ENCODE measurements at regions of chr11 and their contacts with region 1.

Region 1: GRCh38 chr11:120303004-120303637 is 22.0 kb upstream of the TLCD5 start:
- DNase-seq: peak; percentile 81
- ATAC-seq: peak; percentile 95
- H3K4me3 Mint-ChIP-seq: no peak overlapping the region
- H3K27ac Mint-ChIP-seq: no peak overlapping the region
- H3K4me1 Mint-ChIP-seq: peaks cover 9% of the 10 kb centered on the region
- H3K27me3 Mint-ChIP-seq: peaks cover 54% of the 10 kb centered on the region

Region 2: DNA sequence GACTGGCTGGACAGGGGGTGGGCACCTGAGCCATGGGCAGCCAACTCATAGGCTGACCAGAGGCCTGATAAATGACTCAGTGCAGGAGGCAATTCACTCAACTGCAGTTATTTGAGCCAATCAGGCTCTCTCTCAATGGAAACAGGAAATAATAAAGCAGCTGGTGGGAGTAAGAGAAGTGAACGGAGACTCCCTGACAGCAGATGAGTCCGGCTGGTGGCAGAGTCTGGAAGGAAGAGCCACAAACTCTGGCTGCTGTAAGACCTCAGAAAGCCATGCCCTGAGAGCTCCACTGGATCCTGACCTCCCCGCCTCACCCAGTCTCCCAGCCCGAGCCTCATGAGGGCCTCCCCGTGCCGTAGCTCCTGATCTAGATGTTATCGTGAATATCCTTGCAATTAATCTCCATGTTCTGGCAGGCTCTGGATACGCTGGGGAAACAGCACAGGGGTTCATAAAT is 235.0 kb before region 1 on chr11:
- CTCF ChIA-PET with region 1: no interaction called
- DNase-seq: no peak
- ATAC-seq: no peak
- H3K4me3 Mint-ChIP-seq: no peak overlapping the region
- H3K27ac Mint-ChIP-seq: no peak overlapping the region
- H3K4me1 Mint-ChIP-seq: no peaks in the 10 kb centered on the region
- H3K27me3 Mint-ChIP-seq: peaks cover 24% of the 10 kb centered on the region

Region 3: DNA sequence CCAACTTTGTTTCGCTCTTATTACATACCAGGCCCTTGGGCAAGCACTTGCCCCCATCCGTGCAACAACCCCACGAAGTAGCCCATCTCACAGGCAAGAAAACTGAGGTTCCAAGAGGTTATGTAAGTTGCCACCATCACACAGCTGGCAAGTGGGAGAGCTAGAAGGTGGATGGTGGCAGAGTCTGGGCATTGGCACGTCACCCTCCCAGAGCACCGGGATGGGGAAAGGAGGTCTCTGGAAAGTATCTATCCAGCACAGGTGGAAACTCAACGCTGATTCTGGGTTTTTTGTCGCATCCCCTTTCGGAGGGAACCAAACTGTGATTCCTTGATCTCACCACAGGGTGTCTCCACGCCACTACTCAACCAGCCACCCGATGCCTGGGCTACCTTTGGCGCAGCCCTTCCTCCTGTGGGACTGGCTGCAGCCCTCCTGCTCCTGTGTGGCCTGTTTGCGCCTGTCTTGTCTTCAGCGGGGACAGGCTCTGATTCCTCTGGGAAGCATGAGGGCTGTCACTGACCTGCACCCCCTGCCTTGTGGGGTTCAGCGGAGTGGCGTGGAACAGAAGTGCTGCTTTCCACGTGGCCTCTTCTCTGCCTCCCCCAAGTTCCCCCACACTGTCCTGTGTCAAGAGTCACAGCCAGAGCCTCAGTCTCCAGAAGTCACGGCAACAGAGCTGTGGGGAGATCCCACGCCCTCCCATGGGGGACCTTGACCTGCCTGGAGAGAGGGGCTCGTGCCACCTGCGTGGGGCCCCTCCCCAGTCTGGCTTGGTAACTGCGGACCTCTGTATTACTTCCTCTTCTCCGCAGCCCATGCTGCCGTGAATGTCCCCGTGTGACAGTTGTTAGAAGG is 130.8 kb before region 1 on chr11:
- CTCF ChIA-PET with region 1: interaction called, 33 read pairs
- DNase-seq: peak; percentile 68
- ATAC-seq: peak; percentile 68
- H3K4me3 Mint-ChIP-seq: no peak overlapping the region
- H3K27ac Mint-ChIP-seq: no peak overlapping the region
- H3K4me1 Mint-ChIP-seq: peaks cover 4% of the 10 kb centered on the region
- H3K27me3 Mint-ChIP-seq: peaks cover 86% of the 10 kb centered on the region

Region 4: DNA sequence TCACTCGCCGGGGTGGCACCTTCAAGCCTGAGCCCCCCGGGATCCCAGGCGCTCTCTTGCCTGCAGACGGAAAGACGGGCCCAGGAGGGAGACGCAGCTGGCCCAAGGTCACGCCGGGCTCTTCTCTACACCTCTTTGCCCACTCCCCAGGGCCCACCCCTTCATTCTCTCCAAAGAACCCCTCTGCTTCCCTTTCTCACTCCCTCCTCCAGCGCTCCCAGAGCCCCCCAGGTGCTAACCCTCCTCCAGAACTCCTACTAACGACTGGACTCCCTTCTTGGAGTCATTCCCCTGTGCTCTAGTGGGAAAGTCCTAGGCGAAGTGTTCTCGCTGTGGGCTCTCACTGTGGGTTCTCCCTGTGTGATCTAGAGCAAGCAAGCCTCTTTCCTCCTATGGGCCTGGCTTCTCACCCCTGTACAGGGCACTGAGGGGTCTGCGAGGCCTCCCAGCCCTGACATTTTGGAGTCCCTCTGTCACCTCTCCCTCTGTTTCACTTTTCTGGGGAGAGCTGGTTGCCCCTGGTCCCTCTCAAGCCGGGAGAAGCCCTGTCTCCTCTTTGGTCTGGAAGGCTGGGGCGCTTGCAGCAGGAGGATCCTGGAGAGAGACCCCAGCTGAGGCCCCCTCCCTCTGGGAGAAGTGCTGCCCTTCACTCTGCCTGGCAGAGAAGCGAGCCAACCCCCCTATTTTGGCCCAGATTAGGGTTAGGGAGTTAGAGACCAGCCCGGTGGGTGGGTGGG is 91.4 kb before region 1 on chr11:
- CTCF ChIA-PET with region 1: interaction called, 11 read pairs
- DNase-seq: no peak
- ATAC-seq: no peak
- H3K4me3 Mint-ChIP-seq: peak overlapping the region; percentile 77
- H3K27ac Mint-ChIP-seq: peak overlapping the region; percentile 20
- H3K4me1 Mint-ChIP-seq: peaks cover 12% of the 10 kb centered on the region
- H3K27me3 Mint-ChIP-seq: peaks cover 44% of the 10 kb centered on the region

Region 5: DNA sequence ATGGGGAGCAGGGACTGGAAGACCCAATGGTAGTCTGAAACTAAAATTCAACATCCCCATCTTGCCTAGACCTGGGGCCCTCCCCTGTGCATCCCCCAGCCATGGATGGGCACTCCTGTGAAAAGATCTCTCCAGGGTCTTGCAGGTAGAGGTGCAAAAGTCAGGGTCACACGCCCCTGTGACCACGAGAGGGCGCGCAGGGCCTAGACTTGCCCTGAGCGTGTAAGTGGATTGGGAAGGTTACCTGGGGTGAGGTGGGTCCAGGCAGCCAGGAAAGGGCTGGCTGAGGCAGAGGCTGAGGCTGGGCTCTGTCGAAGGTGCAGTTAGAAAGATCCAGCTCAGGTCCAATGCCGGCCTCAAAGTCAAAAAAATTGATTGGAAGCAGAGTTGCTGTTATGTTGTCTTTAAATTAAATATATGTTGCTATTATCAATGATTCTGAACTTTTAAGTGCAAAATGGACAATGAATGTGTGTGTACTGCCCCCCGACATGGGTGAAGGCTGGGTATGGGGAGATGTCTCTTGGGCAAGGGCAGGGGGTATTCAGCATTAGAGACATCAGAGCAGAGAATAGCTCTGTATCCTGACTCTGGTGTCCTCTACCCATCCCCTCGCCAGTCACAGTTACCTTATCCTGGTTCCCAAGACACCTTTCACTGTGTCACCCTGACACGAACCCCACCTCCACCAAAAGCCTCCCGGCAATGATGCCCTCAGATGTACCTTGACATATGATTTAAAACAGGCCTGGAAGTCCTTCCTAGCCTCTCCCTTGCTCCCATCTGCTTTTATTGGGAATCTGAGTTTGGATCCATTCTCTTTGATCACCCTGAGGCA is 67.9 kb before region 1 on chr11:
- CTCF ChIA-PET with region 1: interaction called, 475 read pairs
- DNase-seq: peak; percentile 80
- ATAC-seq: peak; percentile 82
- H3K4me3 Mint-ChIP-seq: no peak overlapping the region
- H3K27ac Mint-ChIP-seq: no peak overlapping the region
- H3K4me1 Mint-ChIP-seq: peaks cover 3% of the 10 kb centered on the region
- H3K27me3 Mint-ChIP-seq: peaks cover 72% of the 10 kb centered on the region

Region 6: GRCh38 chr11:120254788-120255518 is 48.2 kb before region 1 on chr11:
- CTCF ChIA-PET with region 1: interaction called, 161 read pairs
- DNase-seq: no peak
- ATAC-seq: no peak
- H3K4me3 Mint-ChIP-seq: no peak overlapping the region
- H3K27ac Mint-ChIP-seq: no peak overlapping the region
- H3K4me1 Mint-ChIP-seq: peaks cover 7% of the 10 kb centered on the region
- H3K27me3 Mint-ChIP-seq: peaks cover 88% of the 10 kb centered on the region

Region 7: GRCh38 chr11:120335908-120336640 is 33.0 kb after region 1 on chr11 and contains the start of gene ARHGEF12:
- CTCF ChIA-PET with region 1: interaction called, 12 read pairs
- DNase-seq: peak; percentile 89
- ATAC-seq: peak; percentile 76
- H3K4me3 Mint-ChIP-seq: peak within 1 kb of the TSS; percentile 99
- H3K27ac Mint-ChIP-seq: peak within 1 kb of the TSS; percentile 80
- H3K4me1 Mint-ChIP-seq: peaks cover 58% of the 10 kb centered on the region
- H3K27me3 Mint-ChIP-seq: peaks cover 19% of the 10 kb centered on the region
- total RNA-seq, gene ARHGEF12: 44.6 to 61.1 TPM